Left cardiac atrium (tissue), 4 donors: ENCODE measurements at regions of chr5 and their contacts with region 1.

Region 1: GRCh38 chr5:180126726-180127681 is 55.4 kb upstream of the RNF130 start:
- DNase-seq: no peak
- ATAC-seq: peak; percentile 65 to 71

Region 2: DNA sequence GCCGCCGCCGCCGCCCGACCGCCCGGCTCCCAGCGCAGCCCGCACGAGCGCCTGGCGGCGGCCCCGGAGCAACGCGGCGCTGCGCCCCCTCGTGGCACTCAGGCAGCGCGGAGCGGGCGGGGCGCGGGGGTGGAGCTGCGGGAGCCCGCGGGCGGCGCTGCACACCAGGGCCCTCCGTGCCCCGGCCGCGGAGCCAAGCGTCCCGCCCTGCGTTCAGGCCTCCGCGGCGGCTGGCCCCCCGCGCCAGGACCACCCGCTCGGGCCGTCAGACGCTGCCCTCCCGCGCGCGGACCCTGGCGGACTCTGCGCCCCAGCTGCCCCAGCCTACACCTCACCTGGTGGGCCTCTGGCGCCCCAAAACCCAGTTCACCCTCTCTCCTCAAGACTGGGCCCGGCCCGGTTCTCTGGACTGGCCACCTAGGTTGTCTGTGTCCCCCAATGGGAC is 82.2 kb after region 1 on chr5 and contains the start of gene RASGEF1C:
- intact Hi-C with region 1: loop called in 1 of 2 experiments (anchors 5 kb)
- DNase-seq: peak; percentile 61
- ATAC-seq: peak; percentile 86 to 90
- total RNA-seq, gene RASGEF1C: 0.65 TPM